ENCODE measurements at regions of chr17 and their contacts with region 1.

Region 1: DNA sequence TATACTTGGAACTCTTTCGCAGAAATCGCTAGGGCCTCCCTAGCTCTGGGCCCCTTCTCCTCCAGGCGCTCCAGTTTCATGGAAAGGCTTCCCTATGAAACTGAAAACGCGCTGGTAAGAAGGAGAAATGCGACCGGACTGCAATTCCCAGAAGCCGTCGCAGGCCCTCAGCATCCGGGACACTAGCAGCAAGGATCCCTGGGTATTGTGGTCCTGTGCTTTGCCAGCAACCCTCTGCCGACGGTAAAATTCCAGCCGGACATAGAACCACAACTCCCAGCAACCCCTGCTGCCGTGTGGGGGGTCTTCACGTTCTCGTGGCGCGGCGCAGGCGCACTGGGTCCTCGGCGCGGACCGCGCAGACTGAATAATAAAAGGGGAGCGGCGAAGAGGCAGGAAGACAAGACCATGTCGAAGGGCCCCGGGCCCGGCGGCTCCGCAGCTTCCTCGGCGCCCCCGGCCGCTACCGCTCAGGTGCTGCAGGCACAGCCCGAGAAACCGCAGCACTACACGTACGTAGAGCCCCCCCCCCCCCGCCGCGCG is at the start of gene UNK:
- DNase-seq: peak; percentile 94
- H3K4me3 ChIP-seq: peak within 1 kb of the TSS; percentile 68
- H3K27me3 ChIP-seq: no peaks in the 10 kb centered on the region
- CTCF ChIP-seq: no peak
- polyA plus RNA-seq, gene UNK: 7.2 and 8.5 TPM in 2 replicates

Region 2: GRCh38 chr17:75764711-75765421 is 19.7 kb before region 1 on chr17 and contains the start of gene GALK1:
- CTCF ChIA-PET with region 1: interaction called, 48 read pairs
- POLR2A ChIA-PET with region 1: interaction called, 6 read pairs
- DNase-seq: no peak
- H3K4me3 ChIP-seq: peak within 1 kb of the TSS; percentile 78
- H3K27me3 ChIP-seq: no peaks in the 10 kb centered on the region
- CTCF ChIP-seq: peak; percentile 71
- polyA plus RNA-seq, gene GALK1: 19.9 and 35.8 TPM in 2 replicates

Region 3: GRCh38 chr17:75795820-75796607 is 11.5 kb after region 1 on chr17:
- CTCF ChIA-PET with region 1: interaction called, 11 read pairs
- POLR2A ChIA-PET with region 1: interaction called, 7 read pairs
- DNase-seq: no peak
- H3K4me3 ChIP-seq: no peak overlapping the region
- H3K27me3 ChIP-seq: no peaks in the 10 kb centered on the region
- CTCF ChIP-seq: no peak

Region 4: DNA sequence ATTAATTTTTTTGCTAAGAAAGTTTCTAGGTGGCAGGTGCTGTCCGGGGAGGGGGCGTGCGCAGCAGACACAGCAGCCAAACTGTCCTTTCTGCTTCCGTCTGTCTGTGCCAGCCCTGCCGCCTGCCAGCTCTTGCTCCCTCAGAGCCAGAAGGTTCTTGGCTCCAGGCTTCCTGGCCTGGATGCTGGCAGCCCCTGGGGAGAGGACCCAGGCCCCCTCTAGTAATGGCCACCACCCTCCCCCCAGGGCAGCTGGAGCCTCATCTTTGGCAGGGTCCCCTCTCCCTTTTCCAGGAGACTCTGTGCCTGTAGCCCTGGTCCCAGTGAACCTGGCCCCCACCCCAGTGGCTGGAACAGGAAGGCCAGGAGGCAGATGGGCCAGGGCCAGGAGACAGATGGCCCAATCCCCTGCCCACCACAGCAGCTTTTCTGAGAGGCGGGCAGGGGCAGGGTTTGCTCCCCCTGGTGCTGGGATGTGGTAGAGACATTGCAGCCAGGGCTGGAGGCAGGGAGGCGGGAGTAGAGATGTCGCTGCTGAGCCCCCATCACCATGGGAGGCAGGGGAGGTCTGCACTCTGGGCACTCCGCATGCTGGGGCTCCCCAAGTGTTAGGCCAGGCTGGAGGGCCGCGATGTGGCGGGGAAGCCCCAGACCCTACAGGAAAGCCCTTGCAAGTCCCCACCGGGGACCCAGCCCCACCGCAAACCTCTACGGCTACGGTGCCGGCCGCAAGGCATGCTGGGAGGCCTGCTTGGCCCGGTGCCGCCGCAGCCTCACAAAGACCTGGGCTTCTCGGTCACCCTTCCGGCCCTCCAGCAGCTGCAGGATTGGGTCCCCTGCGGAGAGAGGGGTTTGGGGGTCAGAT is 42.9 kb after region 1 on chr17:
- CTCF ChIA-PET with region 1: interaction called, 16 read pairs
- POLR2A ChIA-PET with region 1: no interaction called
- DNase-seq: no peak
- H3K4me3 ChIP-seq: no peak overlapping the region
- H3K27me3 ChIP-seq: no peaks in the 10 kb centered on the region
- CTCF ChIP-seq: peak; percentile 79

Region 5: DNA sequence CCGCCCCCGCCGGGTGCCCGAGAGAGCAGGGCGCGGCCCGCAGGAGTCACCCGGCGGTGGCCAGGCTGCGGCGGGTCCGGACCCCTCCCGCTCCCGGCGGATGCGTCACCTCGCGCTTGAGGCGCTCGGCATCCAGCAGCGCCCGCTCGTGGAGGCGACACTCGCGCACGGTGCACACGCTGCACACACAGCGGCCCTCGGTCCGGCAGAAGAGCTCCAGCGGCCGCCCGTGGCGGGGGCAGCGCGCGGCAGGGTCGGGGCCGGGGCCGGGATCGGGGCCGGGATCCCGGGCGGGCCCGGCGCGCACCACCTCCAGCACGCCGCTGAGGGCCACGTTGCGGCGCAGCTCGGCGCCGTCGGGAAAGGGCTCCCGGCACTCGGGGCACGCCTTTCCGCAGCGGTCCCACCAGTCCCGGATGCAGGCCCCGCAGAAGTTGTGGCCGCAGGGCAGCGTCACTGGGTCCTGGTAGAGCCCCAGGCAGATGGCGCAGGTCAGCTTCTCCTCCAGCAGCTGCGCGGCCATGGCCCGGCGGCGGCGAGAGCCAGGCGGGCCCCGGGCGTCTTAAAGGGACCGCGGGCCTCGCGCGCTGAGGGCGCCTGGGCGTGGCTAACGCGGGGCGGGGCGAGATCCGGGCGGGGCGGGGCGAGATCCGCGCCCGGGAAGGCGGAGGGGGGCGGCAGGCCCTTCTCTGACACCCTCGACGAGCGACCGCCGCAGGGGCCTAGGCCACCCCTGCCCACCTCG is 112.0 kb after region 1 on chr17 and contains the start of gene TRIM65:
- CTCF ChIA-PET with region 1: interaction called, 8 read pairs
- POLR2A ChIA-PET with region 1: interaction called, 18 read pairs
- DNase-seq: no peak
- H3K4me3 ChIP-seq: peak within 1 kb of the TSS; percentile 52
- H3K27me3 ChIP-seq: no peaks in the 10 kb centered on the region
- CTCF ChIP-seq: peak; percentile 40
- polyA plus RNA-seq, gene TRIM65: 5.5 and 8.6 TPM in 2 replicates

Region 6: GRCh38 chr17:76072148-76072858 is 287.8 kb after region 1 on chr17 and contains the start of gene SRP68:
- CTCF ChIA-PET with region 1: no interaction called
- POLR2A ChIA-PET with region 1: interaction called, 12 read pairs
- DNase-seq: peak; percentile 64
- H3K4me3 ChIP-seq: peak within 1 kb of the TSS; percentile 96
- H3K27me3 ChIP-seq: peaks cover 34% of the 10 kb centered on the region
- CTCF ChIP-seq: no peak
- polyA plus RNA-seq, gene SRP68: 62.6 and 70.8 TPM in 2 replicates

Measured in BJ (cell line).